Naive thymus-derived CD4-positive, alpha-beta T cell (primary cell): ENCODE measurements at regions of chr4 and their contacts with region 1.

Region 1: DNA sequence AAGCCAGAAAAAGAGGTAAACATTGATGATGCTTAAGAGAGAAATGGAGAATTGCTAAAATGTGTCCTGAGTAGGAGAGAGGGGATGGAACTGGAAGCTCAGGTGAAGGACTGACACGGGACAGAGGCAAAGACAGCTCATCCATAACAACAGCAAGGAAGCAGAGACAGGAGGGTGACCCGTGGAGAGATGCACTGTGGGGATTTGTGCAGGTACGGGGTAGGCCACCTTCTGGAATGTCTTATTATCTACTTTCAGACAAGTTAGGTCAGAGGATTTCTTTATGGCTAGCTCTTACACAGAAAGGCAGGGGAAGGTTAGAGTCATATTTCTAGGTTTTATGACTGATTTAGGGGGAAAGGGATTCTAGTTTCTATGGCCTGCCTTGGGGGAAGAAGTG is 31.7 kb downstream of the RXFP1 start:
- DNase-seq: no peak
- ATAC-seq: no peak
- H3K4me3 ChIP-seq: no peak overlapping the region
- H3K4me3 Mint-ChIP-seq: no peak overlapping the region
- H3K27ac ChIP-seq: no peak overlapping the region
- H3K27ac Mint-ChIP-seq: no peak overlapping the region
- H3K4me1 ChIP-seq: no peaks in the 10 kb centered on the region
- H3K4me1 Mint-ChIP-seq: no peaks in the 10 kb centered on the region
- H3K27me3 ChIP-seq: no peaks in the 10 kb centered on the region
- H3K27me3 Mint-ChIP-seq: peaks cover 7 to 33% (median 26%) of the 10 kb centered on the region in 5 donors

Region 2: GRCh38 chr4:158571736-158572135 is 18.4 kb after region 1 on chr4:
- CTCF ChIA-PET with region 1: no interaction called
- POLR2A ChIA-PET with region 1: no interaction called
- intact Hi-C with region 1: loop called in 1 of 2 experiments (anchors 2 kb)
- DNase-seq: no peak
- ATAC-seq: no peak
- H3K4me3 ChIP-seq: no peak overlapping the region
- H3K4me3 Mint-ChIP-seq: no peak overlapping the region
- H3K27ac ChIP-seq: no peak overlapping the region
- H3K27ac Mint-ChIP-seq: no peak overlapping the region
- H3K4me1 ChIP-seq: no peaks in the 10 kb centered on the region
- H3K4me1 Mint-ChIP-seq: no peaks in the 10 kb centered on the region
- H3K27me3 ChIP-seq: no peaks in the 10 kb centered on the region
- H3K27me3 Mint-ChIP-seq: peaks cover 3 to 16% (median 9%) of the 10 kb centered on the region in 5 donors

Region 3: DNA sequence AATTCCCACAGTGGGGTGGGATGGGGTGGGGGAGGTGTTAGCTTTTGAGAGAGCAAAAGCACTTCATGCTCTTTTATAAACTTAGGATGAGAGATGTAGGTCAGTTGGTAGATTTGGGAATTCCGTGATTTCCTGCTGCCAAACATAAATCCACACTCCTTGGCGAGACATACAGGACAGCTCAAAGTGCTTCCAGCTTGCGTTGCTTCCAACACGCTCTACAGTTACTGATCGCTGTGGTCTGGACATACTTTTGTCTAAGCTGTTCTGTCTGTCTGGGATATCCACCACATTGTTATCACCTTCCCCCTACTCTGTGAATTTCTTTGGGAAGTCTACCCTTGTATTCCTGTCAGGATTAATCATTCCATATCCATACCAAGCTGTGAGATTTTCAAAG is 667.0 kb after region 1 on chr4:
- CTCF ChIA-PET with region 1: no interaction called
- POLR2A ChIA-PET with region 1: no interaction called
- intact Hi-C with region 1: no loop called
- DNase-seq: no peak
- ATAC-seq: no peak
- H3K4me3 ChIP-seq: no peak overlapping the region
- H3K4me3 Mint-ChIP-seq: no peak overlapping the region
- H3K27ac ChIP-seq: no peak overlapping the region
- H3K27ac Mint-ChIP-seq: no peak overlapping the region
- H3K4me1 ChIP-seq: no peaks in the 10 kb centered on the region
- H3K4me1 Mint-ChIP-seq: peaks cover 0 to 9% (median 4%) of the 10 kb centered on the region in 7 donors
- H3K27me3 ChIP-seq: no peaks in the 10 kb centered on the region
- H3K27me3 Mint-ChIP-seq: no peaks in the 10 kb centered on the region